ENCODE measurements at regions of chr11 and their contacts with region 1.

Region 1: DNA sequence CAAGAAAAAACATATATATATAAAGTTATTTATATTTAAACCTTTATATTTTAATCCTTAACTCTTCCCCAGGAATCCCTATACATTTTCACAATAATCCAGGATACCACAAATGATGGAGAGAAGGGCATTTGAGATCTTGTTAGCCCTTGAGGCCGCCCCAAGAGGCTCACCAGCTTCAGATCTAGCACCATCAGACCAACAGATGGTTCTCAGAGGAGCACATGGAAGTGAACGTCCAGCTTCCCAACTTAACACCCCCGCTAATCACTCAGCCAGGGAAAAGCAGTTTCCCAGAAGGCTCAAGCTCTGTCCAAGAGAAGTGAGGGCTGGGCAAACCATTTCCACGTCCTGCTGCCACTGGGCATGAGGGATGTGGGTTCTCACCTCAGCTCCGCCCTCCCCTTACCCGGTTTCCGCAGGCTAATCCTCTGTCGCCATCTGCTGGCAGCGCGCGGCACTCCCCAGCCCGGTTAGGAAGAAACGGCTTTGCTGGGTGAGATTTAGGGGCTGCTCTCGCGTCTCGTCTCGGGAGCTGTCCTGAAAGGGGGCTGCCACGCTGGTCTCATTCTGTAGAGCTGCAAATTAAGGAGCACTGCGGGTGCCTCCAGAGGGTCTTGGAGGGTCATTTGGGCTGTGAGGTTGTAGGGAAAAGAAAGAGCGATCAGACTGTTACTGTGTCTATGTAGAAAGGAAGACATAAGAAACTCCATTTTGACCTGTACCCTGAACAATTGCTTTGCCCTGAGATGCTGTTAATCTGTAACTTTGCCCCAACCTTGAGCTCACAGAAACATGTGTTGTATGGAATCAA is 6.8 kb upstream of the FAM111A start:
- DNase-seq: peak; percentile 89
- H3K4me3 Mint-ChIP-seq: no peak overlapping the region
- H3K27ac Mint-ChIP-seq: no peak overlapping the region
- H3K4me1 Mint-ChIP-seq: peaks cover 27% of the 10 kb centered on the region
- H3K27me3 Mint-ChIP-seq: no peaks in the 10 kb centered on the region

Region 2: GRCh38 chr11:59106363-59107336 is 29.2 kb before region 1 on chr11 and contains the start of gene FAM111B:
- CTCF ChIA-PET with region 1: interaction called, 19 read pairs
- POLR2A ChIA-PET with region 1: interaction called, 3 read pairs
- DNase-seq: peak; percentile 88
- H3K4me3 Mint-ChIP-seq: peak within 1 kb of the TSS; percentile 95
- H3K27ac Mint-ChIP-seq: peak within 1 kb of the TSS; percentile 91
- H3K4me1 Mint-ChIP-seq: peaks cover 71% of the 10 kb centered on the region
- H3K27me3 Mint-ChIP-seq: peaks cover 4% of the 10 kb centered on the region
- total RNA-seq, gene FAM111B: 95.8 to 106 TPM

Region 3: GRCh38 chr11:59158206-59159068 is 22.6 kb after region 1 on chr11:
- CTCF ChIA-PET with region 1: interaction called, 13 read pairs
- POLR2A ChIA-PET with region 1: no interaction called
- DNase-seq: peak; percentile 75
- H3K4me3 Mint-ChIP-seq: no peak overlapping the region
- H3K27ac Mint-ChIP-seq: peak overlapping the region; percentile 9
- H3K4me1 Mint-ChIP-seq: peaks cover 14% of the 10 kb centered on the region
- H3K27me3 Mint-ChIP-seq: peaks cover 7% of the 10 kb centered on the region

Region 4: GRCh38 chr11:59368238-59369022 is 232.6 kb after region 1 on chr11:
- CTCF ChIA-PET with region 1: no interaction called
- POLR2A ChIA-PET with region 1: no interaction called
- DNase-seq: no peak
- H3K4me3 Mint-ChIP-seq: no peak overlapping the region
- H3K27ac Mint-ChIP-seq: no peak overlapping the region
- H3K4me1 Mint-ChIP-seq: no peaks in the 10 kb centered on the region
- H3K27me3 Mint-ChIP-seq: no peaks in the 10 kb centered on the region